Activated naive CD4-positive, alpha-beta T cell treated with anti-CD3 and anti-CD28 coated beads for 36 hours (primary cell): ENCODE measurements at regions of chr3 and their contacts with region 1.

Region 1: GRCh38 chr3:196942226-196942914 is at the start of gene NCBP2:
- DNase-seq: peak; percentile 100
- H3K4me3 Mint-ChIP-seq: peak within 1 kb of the TSS; percentile 91
- H3K27ac Mint-ChIP-seq: peak within 1 kb of the TSS; percentile 89
- H3K4me1 Mint-ChIP-seq: peaks cover 50% of the 10 kb centered on the region
- H3K27me3 Mint-ChIP-seq: no peaks in the 10 kb centered on the region
- total RNA-seq, gene NCBP2: 91.7 to 98.3 TPM

Region 2: GRCh38 chr3:196219194-196219978 is 723.0 kb before region 1 on chr3:
- CTCF ChIA-PET with region 1: no interaction called
- intact Hi-C with region 1: loop called (anchors 1 kb)
- DNase-seq: peak; percentile 89
- H3K4me3 Mint-ChIP-seq: peak overlapping the region; percentile 66
- H3K27ac Mint-ChIP-seq: peak overlapping the region; percentile 84
- H3K4me1 Mint-ChIP-seq: peaks cover 26% of the 10 kb centered on the region
- H3K27me3 Mint-ChIP-seq: no peaks in the 10 kb centered on the region

Region 3: GRCh38 chr3:196568246-196569002 is 373.9 kb before region 1 on chr3 and contains the starts of genes FBXO45 and WDR53:
- CTCF ChIA-PET with region 1: no interaction called
- intact Hi-C with region 1: loop called (anchors 1 kb)
- DNase-seq: peak; percentile 97
- H3K4me3 Mint-ChIP-seq: peak within 1 kb of the TSS; percentile 98
- H3K27ac Mint-ChIP-seq: peak within 1 kb of the TSS; percentile 91
- H3K4me1 Mint-ChIP-seq: peaks cover 46% of the 10 kb centered on the region
- H3K27me3 Mint-ChIP-seq: no peaks in the 10 kb centered on the region
- total RNA-seq, gene FBXO45: 11.8 to 12.8 TPM
- total RNA-seq, gene WDR53: 14.3 to 15.8 TPM

Region 4: GRCh38 chr3:196632046-196632751 is 310.2 kb before region 1 on chr3:
- CTCF ChIA-PET with region 1: no interaction called
- intact Hi-C with region 1: loop called (anchors 1 kb)
- DNase-seq: peak; percentile 90
- H3K4me3 Mint-ChIP-seq: peak overlapping the region; percentile 88
- H3K27ac Mint-ChIP-seq: peak overlapping the region; percentile 97
- H3K4me1 Mint-ChIP-seq: peaks cover 48% of the 10 kb centered on the region
- H3K27me3 Mint-ChIP-seq: no peaks in the 10 kb centered on the region

Region 5: DNA sequence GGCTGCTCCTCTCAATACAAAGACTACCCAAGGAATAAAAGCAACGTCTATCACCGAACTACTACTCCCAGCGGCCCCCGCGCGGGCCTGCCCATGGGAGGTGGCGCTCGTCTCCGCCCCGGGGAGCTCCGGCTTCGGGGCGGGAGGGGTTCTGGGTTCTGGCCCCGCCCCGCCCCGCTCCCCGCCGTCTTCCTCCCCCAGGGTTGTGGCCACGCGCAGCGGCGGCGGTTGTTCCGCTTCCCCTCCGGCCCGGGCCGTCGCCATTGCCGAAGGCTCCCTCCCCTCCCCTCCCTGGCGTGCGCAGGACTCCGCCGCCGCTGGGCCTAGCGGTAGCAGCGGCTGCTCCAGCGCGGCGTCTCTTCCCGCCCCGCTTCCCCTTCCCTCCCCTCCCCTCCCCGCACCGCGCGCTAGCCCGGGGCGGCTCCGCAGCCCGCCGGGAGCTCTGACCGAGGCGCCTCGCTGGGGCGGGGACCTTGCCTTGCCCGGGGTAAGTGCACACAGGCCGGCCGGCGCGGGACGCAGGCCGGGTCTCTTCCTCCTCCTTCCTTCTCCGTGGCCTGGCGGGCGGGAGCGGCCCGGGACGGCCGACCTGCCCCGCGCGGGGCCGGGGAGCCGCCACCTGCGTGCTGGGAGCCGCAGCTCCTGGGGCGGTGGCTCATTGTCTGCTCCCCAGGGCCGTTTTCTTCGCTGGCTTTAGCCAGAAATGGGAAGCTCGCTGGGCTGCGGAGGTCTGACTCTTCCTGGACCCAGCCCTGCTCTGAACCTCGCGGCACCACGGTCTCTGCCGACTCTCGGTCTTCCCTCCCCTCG is 202.5 kb before region 1 on chr3 and contains the start of gene PAK2:
- CTCF ChIA-PET with region 1: no interaction called
- intact Hi-C with region 1: loop called (anchors 1 kb)
- DNase-seq: peak; percentile 90
- H3K4me3 Mint-ChIP-seq: peak within 1 kb of the TSS; percentile 100
- H3K27ac Mint-ChIP-seq: peak within 1 kb of the TSS; percentile 98
- H3K4me1 Mint-ChIP-seq: peaks cover 18% of the 10 kb centered on the region
- H3K27me3 Mint-ChIP-seq: no peaks in the 10 kb centered on the region
- total RNA-seq, gene PAK2: 66.6 to 68.4 TPM

Region 6: GRCh38 chr3:196867507-196868296 is 74.7 kb before region 1 on chr3 and contains the start of gene SENP5:
- CTCF ChIA-PET with region 1: interaction called, 7 read pairs
- intact Hi-C with region 1: loop called (anchors 1 kb)
- DNase-seq: peak; percentile 92
- H3K4me3 Mint-ChIP-seq: peak within 1 kb of the TSS; percentile 97
- H3K27ac Mint-ChIP-seq: peak within 1 kb of the TSS; percentile 91
- H3K4me1 Mint-ChIP-seq: peaks cover 31% of the 10 kb centered on the region
- H3K27me3 Mint-ChIP-seq: no peaks in the 10 kb centered on the region
- total RNA-seq, gene SENP5: 24.1 to 24.4 TPM

Region 7: GRCh38 chr3:196979545-196979944 is 37.2 kb after region 1 on chr3:
- CTCF ChIA-PET with region 1: no interaction called
- intact Hi-C with region 1: no loop called
- DNase-seq: no peak
- H3K4me3 Mint-ChIP-seq: no peak overlapping the region
- H3K27ac Mint-ChIP-seq: no peak overlapping the region
- H3K4me1 Mint-ChIP-seq: peaks cover 6% of the 10 kb centered on the region
- H3K27me3 Mint-ChIP-seq: peaks cover 7% of the 10 kb centered on the region

Region 8: GRCh38 chr3:197002701-197003454 is 60.5 kb after region 1 on chr3:
- CTCF ChIA-PET with region 1: no interaction called
- intact Hi-C with region 1: loop called (anchors 1 kb)
- DNase-seq: peak; percentile 92
- H3K4me3 Mint-ChIP-seq: no peak overlapping the region
- H3K27ac Mint-ChIP-seq: no peak overlapping the region
- H3K4me1 Mint-ChIP-seq: peaks cover 8% of the 10 kb centered on the region
- H3K27me3 Mint-ChIP-seq: no peaks in the 10 kb centered on the region

Region 9: GRCh38 chr3:197132916-197133530 is 190.7 kb after region 1 on chr3:
- CTCF ChIA-PET with region 1: no interaction called
- intact Hi-C with region 1: no loop called
- DNase-seq: no peak
- H3K4me3 Mint-ChIP-seq: no peak overlapping the region
- H3K27ac Mint-ChIP-seq: no peak overlapping the region
- H3K4me1 Mint-ChIP-seq: no peaks in the 10 kb centered on the region
- H3K27me3 Mint-ChIP-seq: no peaks in the 10 kb centered on the region

Region 10: GRCh38 chr3:197260491-197261163 is 318.3 kb after region 1 on chr3:
- CTCF ChIA-PET with region 1: no interaction called
- intact Hi-C with region 1: no loop called
- DNase-seq: no peak
- H3K4me3 Mint-ChIP-seq: no peak overlapping the region
- H3K27ac Mint-ChIP-seq: no peak overlapping the region
- H3K4me1 Mint-ChIP-seq: peaks cover 43% of the 10 kb centered on the region
- H3K27me3 Mint-ChIP-seq: no peaks in the 10 kb centered on the region